PC-9 (cell line): ENCODE measurements at regions of chr3 and their contacts with region 1.

Region 1: DNA sequence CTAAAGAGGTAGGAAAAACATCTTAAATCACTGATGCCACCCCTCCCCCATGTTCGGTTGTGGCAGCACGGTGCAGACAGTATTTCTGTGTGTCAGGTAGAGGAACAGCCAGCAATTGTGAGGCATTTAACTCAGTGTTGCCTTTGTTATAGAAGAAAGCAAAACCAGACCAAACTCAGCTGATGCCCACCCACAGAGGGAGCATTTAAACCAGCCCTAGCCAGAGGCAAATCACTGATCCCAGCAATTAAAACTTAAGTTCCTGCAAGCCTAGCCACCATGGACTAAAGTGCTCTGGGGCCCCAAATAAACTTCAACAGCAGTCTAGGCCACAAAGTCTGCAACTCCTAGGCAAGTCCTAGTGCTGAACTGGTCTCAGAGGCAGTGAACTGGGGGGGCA is 94.5 kb downstream of the CFAP20DC start:
- DNase-seq: no peak
- H3K4me3 ChIP-seq: no peak overlapping the region
- H3K27ac ChIP-seq: no peak overlapping the region
- H3K4me1 ChIP-seq: no peaks in the 10 kb centered on the region
- H3K27me3 ChIP-seq: no peaks in the 10 kb centered on the region
- CTCF ChIP-seq: no peak

Region 2: GRCh38 chr3:59632760-59633573 is 677.7 kb after region 1 on chr3:
- CTCF ChIA-PET with region 1: no interaction called
- POLR2A ChIA-PET with region 1: no interaction called
- intact Hi-C with region 1: no loop called
- DNase-seq: no peak
- H3K4me3 ChIP-seq: no peak overlapping the region
- H3K27ac ChIP-seq: no peak overlapping the region
- H3K4me1 ChIP-seq: no peaks in the 10 kb centered on the region
- H3K27me3 ChIP-seq: no peaks in the 10 kb centered on the region
- CTCF ChIP-seq: no peak

Region 3: DNA sequence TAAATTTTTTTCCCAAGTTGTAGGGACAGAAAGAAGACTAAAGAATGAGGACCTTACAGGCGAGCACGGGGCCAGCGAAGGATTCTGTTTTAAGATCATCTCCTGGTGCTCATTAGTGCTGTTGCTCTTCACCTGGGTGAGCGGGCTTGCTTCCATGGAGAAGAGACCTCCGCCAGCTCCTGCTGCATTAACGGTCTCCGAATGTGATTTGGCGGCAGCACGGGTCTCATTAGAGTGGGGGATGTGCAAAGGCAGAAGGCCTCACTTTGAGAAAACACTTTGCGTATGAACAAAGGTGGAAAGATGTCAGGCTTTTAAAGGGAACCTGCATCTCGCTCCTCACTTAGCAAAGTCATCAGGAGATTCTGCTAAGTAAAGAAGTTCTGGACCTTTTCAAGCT is 848.0 kb after region 1 on chr3:
- CTCF ChIA-PET with region 1: no interaction called
- POLR2A ChIA-PET with region 1: interaction called, 11 read pairs
- intact Hi-C with region 1: no loop called
- DNase-seq: no peak
- H3K4me3 ChIP-seq: no peak overlapping the region
- H3K27ac ChIP-seq: no peak overlapping the region
- H3K4me1 ChIP-seq: no peaks in the 10 kb centered on the region
- H3K27me3 ChIP-seq: no peaks in the 10 kb centered on the region
- CTCF ChIP-seq: no peak